ENCODE measurements at regions of chr13 and their contacts with region 1.

Region 1: GRCh38 chr13:46321494-46322225 is 65.4 kb downstream of the RUBCNL start:
- DNase-seq: peak; percentile 59
- ATAC-seq: peak; percentile 55
- H3K4me3 ChIP-seq: no peak overlapping the region
- H3K27ac ChIP-seq: no peak overlapping the region
- H3K4me1 ChIP-seq: no peaks in the 10 kb centered on the region
- H3K27me3 ChIP-seq: 0 out of 2 replicates have a peak, but pooled peaks cover 2% of the 10 kb centered on the region
- CTCF ChIP-seq: peak; percentile 81

Region 2: DNA sequence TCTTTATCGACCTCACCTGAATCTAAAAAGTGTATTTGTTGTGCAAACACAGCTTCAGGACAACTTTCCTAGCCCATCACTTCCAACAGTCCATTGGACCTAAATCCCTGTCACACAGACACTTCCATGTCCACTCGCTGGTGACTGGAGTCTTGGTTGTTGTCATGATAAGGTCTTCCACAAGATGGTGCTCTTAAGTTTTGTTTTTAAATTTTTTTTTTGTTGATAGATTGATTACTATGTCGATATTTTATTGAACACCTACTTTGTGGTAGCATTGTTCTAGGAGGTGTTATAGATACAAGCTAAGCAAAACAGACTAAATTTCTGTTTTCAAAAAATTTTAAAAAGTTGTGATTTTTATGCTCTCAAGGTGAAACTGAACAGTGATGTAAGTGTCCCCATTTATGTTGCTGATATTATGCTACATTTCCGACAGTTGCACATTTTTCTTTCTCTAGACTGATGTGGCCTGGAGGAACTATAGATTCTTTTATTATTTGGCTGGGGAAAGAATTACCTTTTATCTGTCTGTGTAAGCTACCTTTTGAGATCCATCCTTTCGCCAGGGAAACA is 698.1 kb before region 1 on chr13:
- CTCF ChIA-PET with region 1: no interaction called
- POLR2A ChIA-PET with region 1: no interaction called
- intact Hi-C with region 1: loop called (anchors 10 kb)
- DNase-seq: peak; percentile 45
- ATAC-seq: peak; percentile 42; the same call in 1 of the 2 replicates
- H3K4me3 ChIP-seq: no peak overlapping the region
- H3K27ac ChIP-seq: no peak overlapping the region
- H3K4me1 ChIP-seq: peaks cover 13% of the 10 kb centered on the region
- H3K27me3 ChIP-seq: 0 out of 2 replicates have a peak, but pooled peaks cover 4% of the 10 kb centered on the region
- CTCF ChIP-seq: peak; percentile 69

Region 3: GRCh38 chr13:46160471-46161066 is 161.1 kb before region 1 on chr13:
- CTCF ChIA-PET with region 1: interaction called, 3 read pairs
- POLR2A ChIA-PET with region 1: no interaction called
- intact Hi-C with region 1: loop called (anchors 5 kb)
- DNase-seq: peak; percentile 57
- ATAC-seq: peak; percentile 70
- H3K4me3 ChIP-seq: no peak overlapping the region
- H3K27ac ChIP-seq: no peak overlapping the region
- H3K4me1 ChIP-seq: no peaks in the 10 kb centered on the region
- H3K27me3 ChIP-seq: no peaks in the 10 kb centered on the region
- CTCF ChIP-seq: peak; percentile 77